ENCODE measurements at regions of chr17 and their contacts with region 1.

Region 1: DNA sequence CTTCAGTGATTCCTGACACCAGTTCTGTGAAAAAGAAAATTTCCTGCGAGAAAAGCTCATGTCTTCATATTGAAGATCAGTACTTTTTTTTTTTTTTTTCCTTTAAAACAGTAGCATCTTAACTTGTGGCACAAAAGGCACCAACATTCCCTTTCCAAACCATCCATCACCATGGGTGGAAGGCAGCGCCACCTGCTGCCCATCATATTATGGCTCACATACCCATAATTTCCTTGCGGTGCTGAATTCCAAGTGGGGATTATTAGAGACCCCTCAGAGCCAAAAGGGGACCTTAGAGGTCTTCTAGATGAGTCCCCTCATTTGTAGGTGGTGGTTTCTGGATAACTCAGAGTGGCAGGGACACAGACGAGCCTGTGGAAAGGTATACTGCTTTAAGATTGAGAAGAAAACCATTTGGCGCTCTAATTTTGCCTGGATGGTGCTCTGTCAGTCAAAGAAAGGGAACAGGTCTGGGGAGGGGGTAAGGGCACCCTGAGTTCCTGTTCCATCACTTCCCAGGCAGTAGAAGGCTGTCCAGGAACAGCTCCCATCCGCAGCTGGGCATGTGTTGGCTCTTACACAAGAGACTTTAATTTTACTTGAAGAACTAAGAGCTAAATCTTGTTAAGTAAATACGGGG is 7.9 kb upstream of the SOST start:
- DNase-seq: peak; percentile 54
- ATAC-seq: no peak
- H3K4me3 Mint-ChIP-seq: no peak overlapping the region
- H3K27ac Mint-ChIP-seq: no peak overlapping the region
- H3K4me1 Mint-ChIP-seq: no peaks in the 10 kb centered on the region
- H3K27me3 Mint-ChIP-seq: peaks cover 10% of the 10 kb centered on the region

Region 2: DNA sequence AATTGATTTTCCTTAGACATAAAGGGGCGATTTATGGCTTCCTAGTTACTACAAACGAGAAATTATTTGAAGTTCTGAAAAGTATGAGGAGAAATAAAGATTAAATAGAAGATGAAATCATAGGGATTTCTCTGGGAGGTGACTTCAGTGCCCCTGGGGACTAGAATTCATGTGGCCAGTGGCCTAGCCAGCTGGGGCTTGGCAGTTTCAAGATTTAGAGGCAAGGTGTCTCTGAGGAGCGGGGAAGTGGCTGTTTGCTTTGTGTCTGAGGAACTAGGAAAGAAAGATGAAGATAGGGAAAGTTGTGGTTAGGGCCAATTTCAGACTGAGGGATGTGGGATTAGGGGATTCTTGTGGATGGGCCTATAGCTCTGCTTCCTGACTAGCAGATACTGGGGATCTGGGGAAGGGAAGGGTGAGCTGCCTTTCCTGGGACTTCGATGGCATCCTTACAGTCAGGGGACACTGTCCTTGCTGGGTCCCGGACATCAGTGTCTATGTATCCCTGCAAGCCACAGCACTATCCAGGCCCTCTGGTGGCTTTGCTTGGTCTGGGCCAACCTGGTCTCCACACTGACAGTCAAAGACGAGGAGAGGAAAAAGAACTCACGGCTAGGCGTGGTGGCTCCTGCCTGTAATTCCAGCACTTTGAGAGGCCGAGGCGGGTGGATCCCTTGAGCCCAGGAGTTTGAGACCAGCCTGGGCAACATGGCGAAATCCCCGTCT is 82.4 kb before region 1 on chr17:
- CTCF ChIA-PET with region 1: interaction called, 14 read pairs
- DNase-seq: no peak
- ATAC-seq: no peak
- H3K4me3 Mint-ChIP-seq: no peak overlapping the region
- H3K27ac Mint-ChIP-seq: no peak overlapping the region
- H3K4me1 Mint-ChIP-seq: no peaks in the 10 kb centered on the region
- H3K27me3 Mint-ChIP-seq: peaks cover 19% of the 10 kb centered on the region

Region 3: DNA sequence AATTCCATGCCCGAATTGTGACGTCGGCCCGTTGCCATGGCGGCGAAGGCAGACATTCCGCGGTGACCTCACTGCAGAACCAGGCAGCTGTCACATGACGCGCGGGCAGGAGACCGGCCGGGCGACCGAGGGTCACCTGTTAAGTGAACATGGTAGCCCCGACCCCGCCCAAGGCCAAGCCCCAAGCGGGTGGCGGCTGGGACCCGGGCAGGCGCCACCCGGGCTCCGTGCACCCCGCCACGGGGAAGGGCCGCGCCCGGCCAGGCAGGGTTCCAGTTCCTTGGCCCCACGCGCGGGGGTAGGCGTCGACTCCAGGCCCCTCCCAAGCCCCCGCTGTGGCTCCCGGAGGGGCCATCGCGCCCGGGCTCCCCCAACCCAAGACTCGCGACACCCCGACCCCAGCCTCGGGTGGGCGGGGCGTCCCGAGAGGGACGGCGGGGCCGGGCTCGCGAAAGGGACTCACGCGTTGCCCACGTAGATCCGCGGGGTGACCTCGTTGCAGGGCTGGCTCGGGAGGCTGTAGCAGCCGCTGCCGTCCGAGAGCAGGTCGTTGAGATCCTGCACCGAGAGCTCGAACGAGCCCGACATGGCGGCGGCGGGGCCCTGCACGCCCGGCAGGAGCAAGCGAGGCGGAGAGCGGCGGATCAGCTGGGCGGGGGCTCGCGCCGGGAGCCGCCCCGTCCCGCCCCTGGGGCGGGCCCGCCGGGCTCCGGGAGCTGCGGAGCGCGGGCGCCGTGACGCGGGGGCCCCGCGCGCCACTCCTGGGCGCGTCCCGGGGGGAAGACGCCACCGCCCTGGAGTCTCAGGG is 12.0 kb after region 1 on chr17 and contains the start of gene DUSP3:
- CTCF ChIA-PET with region 1: interaction called, 19 read pairs
- DNase-seq: peak; percentile 75
- ATAC-seq: peak; percentile 98
- H3K4me3 Mint-ChIP-seq: peak within 1 kb of the TSS; percentile 80
- H3K27ac Mint-ChIP-seq: peak within 1 kb of the TSS; percentile 73
- H3K4me1 Mint-ChIP-seq: peaks cover 11% of the 10 kb centered on the region
- H3K27me3 Mint-ChIP-seq: peaks cover 43% of the 10 kb centered on the region
- total RNA-seq, gene DUSP3: 5.6 to 6.0 TPM